ENCODE measurements at regions of chr7 and their contacts with region 1.

Region 1: DNA sequence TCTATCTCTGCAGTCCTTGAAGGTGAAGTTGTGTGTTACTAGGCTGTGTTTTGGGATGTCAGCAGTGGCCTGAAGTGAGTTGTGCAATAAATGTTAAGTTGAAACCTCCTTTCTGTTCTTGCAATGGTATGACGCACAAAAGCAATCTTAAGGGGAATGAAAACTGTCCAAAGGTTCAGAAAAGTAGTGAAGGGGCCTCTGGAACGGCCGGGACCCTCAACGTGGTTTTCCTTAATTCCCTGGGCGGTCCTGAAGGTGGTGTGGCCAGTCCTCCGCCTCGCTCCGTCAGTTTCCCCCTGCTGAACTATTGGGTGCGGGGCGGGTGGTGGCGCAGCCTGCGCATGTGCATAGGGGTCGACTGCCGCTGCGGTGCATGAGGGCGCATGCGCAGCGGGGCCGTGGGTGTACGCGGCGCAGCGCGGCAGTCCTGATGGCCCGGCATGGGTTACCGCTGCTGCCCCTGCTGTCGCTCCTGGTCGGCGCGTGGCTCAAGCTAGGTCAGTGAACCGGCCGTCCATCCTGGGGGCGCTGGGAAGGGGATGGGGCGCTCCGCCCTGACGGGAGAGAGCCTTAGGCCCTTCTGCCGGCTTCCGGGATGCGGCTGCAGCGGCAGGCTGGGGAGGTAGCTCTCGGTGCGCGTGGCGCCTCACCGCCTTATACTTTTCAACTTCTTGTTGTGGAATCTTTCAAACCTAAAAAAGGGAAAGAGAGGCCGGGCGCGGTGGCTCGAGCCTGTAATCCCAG is at the start of gene SUMF2:
- DNase-seq: peak; percentile 94
- total RNA-seq, gene SUMF2: 32.3 TPM

Region 2: GRCh38 chr7:56051339-56052191 is 12.5 kb before region 1 on chr7 and contains the starts of genes CCT6A and PSPH:
- intact Hi-C with region 1: loop called (anchors 1 kb)
- DNase-seq: peak; percentile 99
- total RNA-seq, gene CCT6A: 74.0 TPM
- total RNA-seq, gene PSPH: 9.7 TPM

Region 3: DNA sequence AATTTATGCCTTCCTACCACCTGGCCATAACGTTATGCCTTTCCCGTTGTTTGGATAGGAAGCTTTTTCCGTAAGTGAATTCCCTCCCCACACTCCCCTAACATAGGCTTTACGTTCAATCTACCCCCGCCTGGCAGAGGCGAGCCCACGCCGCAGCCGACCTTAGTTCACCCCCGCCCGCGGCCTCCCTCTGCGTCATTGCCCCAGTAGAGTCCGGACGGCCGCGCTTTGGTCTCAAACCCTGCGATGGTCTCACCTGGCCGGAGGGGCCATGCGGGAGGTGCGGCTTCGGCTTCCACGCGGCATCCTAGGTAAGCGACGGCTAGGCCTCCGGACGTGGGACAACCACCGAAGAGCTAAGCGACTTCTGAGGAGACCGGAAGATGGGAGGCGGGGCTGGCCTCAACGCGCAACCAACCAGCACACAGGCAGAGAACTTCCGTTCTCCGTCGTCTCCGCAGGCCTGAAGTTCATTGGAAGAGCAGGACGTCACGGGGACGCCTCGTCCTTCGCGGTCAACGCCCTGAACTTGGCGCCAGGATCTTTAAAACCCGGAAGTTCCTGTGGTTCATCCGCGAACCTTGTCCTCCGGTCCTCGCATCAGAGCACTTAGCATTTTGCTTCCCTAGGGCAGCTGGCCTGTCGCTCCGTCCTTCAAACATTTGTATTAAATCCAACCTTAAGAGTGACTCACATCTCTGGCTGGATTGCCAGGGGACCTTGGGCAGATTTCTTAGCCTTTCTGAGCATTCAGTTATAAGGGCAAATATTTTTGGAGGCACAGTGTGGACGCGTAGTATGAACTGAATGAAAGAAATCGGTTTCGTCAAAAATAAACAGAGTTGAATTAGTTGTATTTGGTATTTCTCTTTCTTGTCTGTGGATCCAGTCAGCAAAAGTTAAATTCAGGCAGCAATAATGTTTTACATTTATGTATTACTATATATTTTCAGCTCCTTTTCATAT is 42.3 kb after region 1 on chr7 and contains the start of gene CHCHD2:
- intact Hi-C with region 1: loop called (anchors 5 kb)
- DNase-seq: peak; percentile 98
- total RNA-seq, gene CHCHD2: 394 TPM

Measured in cardiac septum (tissue), 1 donor.